ENCODE measurements at regions of chr19 and their contacts with region 1.

Region 1: GRCh38 chr19:55258828-55259539 is at the start of gene PPP6R1:
- DNase-seq: peak; percentile 100
- H3K4me3 ChIP-seq: peak within 1 kb of the TSS; percentile 82 to 95 (median 94)
- H3K27ac ChIP-seq: peak within 1 kb of the TSS; percentile 89
- H3K4me1 ChIP-seq: peaks cover 28% of the 10 kb centered on the region
- H3K27me3 ChIP-seq: no peaks in the 10 kb centered on the region
- CTCF ChIP-seq: peak in 1 of 2 donors; percentile 1
- total RNA-seq, gene PPP6R1: 28.3 to 74.2 TPM

Region 2: DNA sequence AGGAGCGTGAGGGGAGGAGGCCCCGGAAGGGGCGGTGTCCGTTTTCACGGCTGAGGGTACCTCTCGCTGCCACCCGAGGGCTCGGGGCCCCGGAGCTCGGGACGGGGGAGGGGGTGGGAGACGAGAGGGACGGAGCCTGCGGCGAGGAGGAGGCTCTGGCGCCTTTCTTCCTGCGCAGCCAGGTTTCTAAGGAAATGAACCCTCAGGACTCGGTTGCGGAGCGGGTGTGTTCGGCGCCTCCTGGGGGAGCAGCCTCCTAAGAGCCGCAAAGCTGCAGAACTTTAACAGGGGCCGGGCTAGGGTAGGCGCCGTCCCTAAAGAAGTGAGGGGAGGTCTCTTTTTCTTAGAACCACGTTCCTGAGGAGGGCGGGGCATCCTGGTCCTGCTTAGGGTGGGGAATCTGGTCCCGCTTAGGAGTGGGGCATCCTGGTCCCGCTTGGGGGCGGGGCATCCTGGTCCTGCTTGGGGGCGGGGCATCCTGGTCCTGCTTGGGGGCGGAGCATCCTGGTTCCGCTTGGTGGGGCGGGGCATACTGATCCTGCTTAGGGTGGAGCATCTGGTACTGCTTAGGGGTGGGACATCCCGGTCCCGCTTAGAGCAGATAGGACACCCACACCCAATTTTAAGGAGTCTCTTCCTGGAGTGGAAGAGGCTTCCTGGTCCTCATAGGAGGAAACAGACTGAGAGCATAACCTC is 85.1 kb before region 1 on chr19:
- CTCF ChIA-PET with region 1: interaction called, 3 read pairs
- dilution Hi-C with region 1: loop called (anchors 5 kb)
- in situ Hi-C with region 1: no loop called
- intact Hi-C with region 1: loop called (anchors 1 kb)
- DNase-seq: peak; percentile 30
- H3K4me3 ChIP-seq: peak overlapping the region; percentile 56 to 69 (median 59)
- H3K27ac ChIP-seq: no peak overlapping the region
- H3K4me1 ChIP-seq: peaks cover 15% of the 10 kb centered on the region
- H3K27me3 ChIP-seq: no peaks in the 10 kb centered on the region
- CTCF ChIP-seq: peak in 1 of 2 donors; percentile 33

Region 3: GRCh38 chr19:55279770-55280643 is 21.0 kb after region 1 on chr19 and contains the start of gene HSPBP1:
- CTCF ChIA-PET with region 1: no interaction called
- dilution Hi-C with region 1: no loop called
- in situ Hi-C with region 1: no loop called
- intact Hi-C with region 1: loop called (anchors 1 kb)
- DNase-seq: peak; percentile 97
- H3K4me3 ChIP-seq: peak within 1 kb of the TSS; percentile 62 to 94 (median 69)
- H3K27ac ChIP-seq: peak within 1 kb of the TSS; percentile 81
- H3K4me1 ChIP-seq: peaks cover 5% of the 10 kb centered on the region
- H3K27me3 ChIP-seq: no peaks in the 10 kb centered on the region
- CTCF ChIP-seq: no peak
- total RNA-seq, gene HSPBP1: 27.5 to 42.9 TPM

Region 4: DNA sequence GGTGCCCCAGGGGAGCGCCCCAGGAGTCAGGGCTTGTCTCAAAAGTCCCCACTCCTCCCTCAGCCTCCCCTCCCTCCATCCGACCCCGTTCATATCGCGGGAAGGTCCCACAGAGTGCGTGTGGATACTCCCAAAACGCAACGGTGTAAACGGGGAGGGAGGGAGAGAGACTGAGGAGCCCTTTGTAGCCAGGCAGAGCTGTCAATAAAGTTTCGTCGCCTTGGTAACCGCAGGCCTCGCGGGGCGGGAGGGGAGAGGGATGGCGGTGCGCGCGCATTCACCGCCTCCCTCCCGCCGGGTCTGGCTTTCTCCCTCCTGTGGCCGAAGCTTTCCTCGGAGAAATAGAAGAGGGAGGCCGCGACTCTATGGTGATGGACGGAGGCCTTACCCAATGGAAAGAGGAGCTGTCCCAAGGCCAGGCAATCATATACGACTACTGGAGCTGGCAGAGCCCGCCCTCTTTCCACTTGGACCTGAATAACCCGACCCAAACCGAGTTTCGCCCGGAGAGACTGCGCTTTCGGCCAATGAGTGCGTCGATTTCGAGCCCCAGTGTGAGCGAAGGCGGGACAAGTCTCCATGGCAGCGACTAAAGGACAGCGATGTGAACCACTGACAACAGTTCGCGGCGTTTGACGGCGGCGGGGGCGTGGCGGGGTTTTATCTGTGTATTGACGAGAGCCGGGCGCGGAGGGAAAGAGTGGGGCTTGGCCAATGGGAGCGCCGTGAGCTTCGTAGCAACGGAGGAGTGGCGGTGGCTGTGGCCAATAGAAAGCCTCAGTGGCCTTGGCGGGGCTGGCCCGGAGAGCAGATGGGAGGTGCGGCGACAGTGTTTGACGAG is 80.3 kb after region 1 on chr19 and contains the start of gene KMT5C:
- CTCF ChIA-PET with region 1: no interaction called
- dilution Hi-C with region 1: no loop called
- in situ Hi-C with region 1: no loop called
- intact Hi-C with region 1: loop called (anchors 2 kb)
- DNase-seq: peak; percentile 100
- H3K4me3 ChIP-seq: peak within 1 kb of the TSS; percentile 48 to 83 (median 61)
- H3K27ac ChIP-seq: peak within 1 kb of the TSS; percentile 99
- H3K4me1 ChIP-seq: peaks cover 48% of the 10 kb centered on the region
- H3K27me3 ChIP-seq: no peaks in the 10 kb centered on the region
- CTCF ChIP-seq: peak in 1 of 2 donors; percentile 46
- total RNA-seq, gene KMT5C: 15.6 to 18.8 TPM

Region 5: GRCh38 chr19:55385740-55386529 is 127.0 kb after region 1 on chr19 and contains the start of gene RPL28:
- CTCF ChIA-PET with region 1: no interaction called
- dilution Hi-C with region 1: no loop called
- in situ Hi-C with region 1: no loop called
- intact Hi-C with region 1: loop called (anchors 1 kb)
- DNase-seq: peak; percentile 96
- H3K4me3 ChIP-seq: peak within 1 kb of the TSS; percentile 74 to 98 (median 81)
- H3K27ac ChIP-seq: peak within 1 kb of the TSS; percentile 89
- H3K4me1 ChIP-seq: peaks cover 32% of the 10 kb centered on the region
- H3K27me3 ChIP-seq: no peaks in the 10 kb centered on the region
- CTCF ChIP-seq: no peak
- total RNA-seq, gene RPL28: 279 to 1,713 TPM